PC-3 (cell line): ENCODE measurements at regions of chr7 and their contacts with region 1.

Region 1: DNA sequence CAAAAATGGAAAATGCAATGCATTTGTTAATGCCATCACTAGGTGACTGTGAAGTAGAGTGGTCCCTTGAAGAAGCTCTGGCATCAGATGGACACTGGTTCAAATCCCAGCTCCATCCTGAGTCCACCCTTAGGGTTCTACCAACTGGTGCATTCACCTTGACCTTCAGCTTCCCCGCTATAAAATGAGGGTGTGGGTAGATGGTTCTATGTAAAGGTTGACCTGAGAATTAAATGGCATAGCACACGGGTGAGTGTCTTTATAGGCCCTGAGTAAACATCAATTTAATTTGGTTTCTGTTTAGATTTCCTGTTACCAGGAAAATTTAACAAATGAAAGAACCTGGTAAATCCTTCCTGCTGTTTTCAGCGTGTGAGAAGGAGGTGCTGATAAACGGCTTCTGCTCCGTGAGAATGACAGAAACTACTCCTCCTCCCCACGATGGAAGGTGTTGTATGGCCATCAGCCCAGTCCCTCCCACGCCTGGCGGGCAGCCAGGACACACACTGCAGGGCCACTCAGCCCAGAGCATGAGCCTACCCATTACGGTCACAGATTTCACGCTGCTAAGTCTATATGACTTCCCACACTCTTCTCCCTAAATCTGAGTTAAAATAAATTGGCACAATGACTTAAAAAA is 210.1 kb downstream of the TNS3 start:
- DNase-seq: peak; percentile 74
- ATAC-seq: peak; percentile 83
- H3K4me3 ChIP-seq: 0 out of 2 replicates have a peak overlapping the region, but pooled peaks have one; percentile 2
- H3K27ac ChIP-seq: peak overlapping the region; percentile 73
- H3K4me1 ChIP-seq: peaks cover 25% of the 10 kb centered on the region
- H3K27me3 ChIP-seq: no peaks in the 10 kb centered on the region
- CTCF ChIP-seq: no peak

Region 2: GRCh38 chr7:47361746-47362215 is 10.1 kb before region 1 on chr7:
- CTCF ChIA-PET with region 1: no interaction called
- POLR2A ChIA-PET with region 1: no interaction called
- intact Hi-C with region 1: loop called (anchors 1 kb)
- DNase-seq: peak; percentile 98
- ATAC-seq: peak; percentile 97
- H3K4me3 ChIP-seq: no peak overlapping the region
- H3K27ac ChIP-seq: peak overlapping the region; percentile 85
- H3K4me1 ChIP-seq: peaks cover 15% of the 10 kb centered on the region
- H3K27me3 ChIP-seq: no peaks in the 10 kb centered on the region
- CTCF ChIP-seq: no peak